SK-N-SH (cell line): ENCODE measurements at regions of chr9 and their contacts with region 1.

Region 1: GRCh38 chr9:116605904-116606341 is 81.2 kb upstream of the TRIM32 start:
- DNase-seq: peak; percentile 53
- H3K4me3 ChIP-seq: no peak overlapping the region
- H3K27ac ChIP-seq: peak overlapping the region in 1 of 2 experiments; percentile 98; a peak in 2 of 4 replicates
- H3K4me1 ChIP-seq: peaks cover 0 to 22% of the 10 kb centered on the region in 2 experiments; a peak in 2 of 4 replicates
- H3K27me3 ChIP-seq: no peaks in the 10 kb centered on the region
- CTCF ChIP-seq: no peak
- EP300 ChIP-seq: peak in 1 of 2 experiments; percentile 82; a peak in 2 of 4 replicates
- RAD21 ChIP-seq: no peak; the same call in 1 of the 2 replicates

Region 2: DNA sequence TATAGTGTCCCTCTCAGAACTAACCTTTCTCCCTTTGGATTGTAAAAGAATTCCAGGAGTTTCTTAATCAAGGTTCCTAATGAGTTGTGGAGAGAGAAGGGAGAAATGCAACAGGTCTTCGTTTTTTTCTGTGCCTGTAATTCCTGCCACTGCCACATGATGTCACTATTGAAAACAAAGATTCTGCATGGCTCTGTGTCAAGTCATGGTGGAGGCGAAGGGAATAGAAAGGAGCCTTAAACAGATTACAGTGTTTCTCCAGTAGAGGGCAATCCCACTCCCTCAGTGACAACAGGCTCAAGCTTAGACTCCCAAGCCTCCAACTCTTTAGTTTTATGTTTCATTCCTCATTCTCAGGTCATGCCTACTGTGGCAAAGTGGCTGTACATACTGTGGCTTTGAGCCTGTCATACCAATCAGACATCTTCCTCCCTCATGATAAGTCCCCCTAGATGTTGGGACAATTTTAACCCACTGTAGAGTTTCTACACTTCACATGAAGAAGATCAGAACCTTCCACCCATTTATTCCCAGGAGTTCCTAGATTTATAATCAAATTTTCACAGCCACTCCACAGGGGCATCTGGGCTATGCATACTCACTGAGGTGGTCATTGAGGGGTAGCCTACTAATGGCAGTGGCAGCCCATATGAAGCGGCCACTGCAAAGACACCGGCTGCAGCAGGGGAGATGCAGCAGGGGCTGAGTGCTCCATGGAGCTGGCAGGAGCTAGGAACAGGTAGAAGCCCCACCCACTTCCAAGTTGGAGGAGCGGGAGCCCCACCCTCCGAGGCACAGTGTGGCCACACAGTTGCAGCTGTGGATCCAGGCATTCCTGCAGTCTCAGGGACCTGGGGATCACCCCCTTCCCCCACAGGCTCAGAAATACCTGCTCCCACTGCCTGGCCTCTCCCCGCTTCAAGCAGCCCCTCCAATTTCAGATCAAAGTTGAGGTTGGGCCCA is 16.2 kb before region 1 on chr9:
- CTCF ChIA-PET with region 1: interaction called, 11 read pairs
- POLR2A ChIA-PET with region 1: no interaction called
- DNase-seq: peak; percentile 36
- H3K4me3 ChIP-seq: no peak overlapping the region
- H3K27ac ChIP-seq: no peak overlapping the region
- H3K4me1 ChIP-seq: no peaks in the 10 kb centered on the region
- H3K27me3 ChIP-seq: no peaks in the 10 kb centered on the region
- CTCF ChIP-seq: peak; percentile 68
- EP300 ChIP-seq: no peak
- RAD21 ChIP-seq: peak; percentile 65

Region 3: DNA sequence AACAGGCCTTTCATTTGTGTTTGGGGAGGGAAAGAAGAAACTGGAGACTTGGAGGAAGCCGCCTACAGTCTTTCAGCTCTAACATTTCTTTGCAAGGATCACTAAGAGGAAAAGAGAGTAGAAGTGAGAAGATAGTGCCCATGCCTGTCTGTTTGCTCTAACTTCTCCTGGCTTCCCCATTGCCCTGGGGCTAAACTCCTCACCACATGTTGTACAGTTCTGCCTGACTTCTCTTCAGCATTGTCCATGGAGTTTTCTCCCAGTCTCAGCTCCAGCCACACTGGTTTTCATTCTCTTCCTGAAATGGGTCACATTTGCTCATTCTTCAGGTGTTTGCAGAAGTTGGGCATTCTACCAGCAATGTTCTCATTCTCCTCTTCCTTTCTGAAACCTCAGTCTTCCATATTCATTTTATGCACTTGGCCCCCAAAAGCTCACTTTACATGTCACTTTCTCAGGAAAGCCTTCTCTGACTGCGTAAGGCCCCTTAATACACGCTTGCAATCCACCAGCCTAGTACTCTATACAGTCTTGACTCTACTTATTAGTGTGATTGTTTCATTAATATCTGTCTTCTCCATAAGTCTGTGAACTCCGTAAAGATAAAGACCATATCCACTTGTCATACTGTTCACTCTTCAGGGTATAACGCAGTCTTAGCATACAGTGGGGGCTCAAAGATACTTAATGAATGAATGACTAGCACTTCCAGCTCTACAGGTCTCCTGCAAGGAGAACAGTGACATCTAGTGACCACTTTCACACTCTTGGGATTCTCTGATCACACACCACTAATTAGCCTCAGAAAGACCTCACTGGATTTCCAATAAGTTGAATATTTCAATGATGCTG is 41.0 kb after region 1 on chr9:
- CTCF ChIA-PET with region 1: interaction called, 13 read pairs
- POLR2A ChIA-PET with region 1: no interaction called
- DNase-seq: peak; percentile 25
- H3K4me3 ChIP-seq: no peak overlapping the region
- H3K27ac ChIP-seq: no peak overlapping the region
- H3K4me1 ChIP-seq: peaks cover 0 to 9% of the 10 kb centered on the region in 2 experiments; a peak in 2 of 4 replicates
- H3K27me3 ChIP-seq: no peaks in the 10 kb centered on the region
- CTCF ChIP-seq: peak; percentile 73
- EP300 ChIP-seq: no peak
- RAD21 ChIP-seq: peak; percentile 88